ENCODE measurements at regions of chr4 and their contacts with region 1.

Region 1: GRCh38 chr4:38034986-38035882 is 75.0 kb downstream of the PTTG2 start:
- DNase-seq: peak in 1 of 2 donors; percentile 39
- H3K4me3 ChIP-seq: no peak overlapping the region
- H3K27ac ChIP-seq: peak overlapping the region; percentile 19 to 57 (median 34)
- H3K4me1 ChIP-seq: peaks cover 6 to 7% of the 10 kb centered on the region in 2 donors
- H3K27me3 ChIP-seq: no peaks in the 10 kb centered on the region
- CTCF ChIP-seq: peak; percentile 24 to 91 (median 63)
- POLR2A ChIP-seq: no peak

Region 2: GRCh38 chr4:37588150-37588549 is 447.1 kb before region 1 on chr4:
- intact Hi-C with region 1: no loop called
- DNase-seq: no peak
- H3K4me3 ChIP-seq: no peak overlapping the region
- H3K27ac ChIP-seq: no peak overlapping the region
- H3K4me1 ChIP-seq: no peaks in the 10 kb centered on the region
- H3K27me3 ChIP-seq: no peaks in the 10 kb centered on the region
- CTCF ChIP-seq: no peak
- POLR2A ChIP-seq: no peak

Region 3: DNA sequence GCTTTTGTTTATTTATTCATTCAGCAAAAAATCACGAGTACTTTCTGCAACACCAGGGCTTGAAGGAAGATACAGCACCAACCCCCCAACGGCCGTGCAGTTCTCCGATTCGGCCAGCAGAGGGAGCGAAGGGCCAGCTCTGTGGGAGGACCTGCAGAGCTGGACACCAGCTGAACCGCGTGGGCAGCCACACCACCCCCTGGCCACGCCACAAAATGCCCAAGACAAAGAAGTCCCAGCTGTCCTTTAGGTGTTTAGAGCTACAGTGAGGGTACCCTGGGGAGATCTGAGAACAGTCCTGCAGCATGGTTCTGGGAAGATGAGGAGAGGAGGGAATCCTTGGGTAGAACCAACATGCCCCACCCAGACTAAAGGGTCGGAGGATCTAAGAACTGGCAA is 432.2 kb before region 1 on chr4:
- intact Hi-C with region 1: loop called (anchors 10 kb)
- DNase-seq: peak; percentile 83 to 87
- H3K4me3 ChIP-seq: no peak overlapping the region
- H3K27ac ChIP-seq: no peak overlapping the region
- H3K4me1 ChIP-seq: peaks cover 0 to 6% of the 10 kb centered on the region in 2 donors
- H3K27me3 ChIP-seq: no peaks in the 10 kb centered on the region
- CTCF ChIP-seq: peak; percentile 96 to 99 (median 98)
- POLR2A ChIP-seq: no peak

Region 4: GRCh38 chr4:37802068-37802666 is 233.1 kb before region 1 on chr4:
- intact Hi-C with region 1: loop called (anchors 5 kb)
- DNase-seq: peak; percentile 63 to 78
- H3K4me3 ChIP-seq: no peak overlapping the region
- H3K27ac ChIP-seq: no peak overlapping the region
- H3K4me1 ChIP-seq: no peaks in the 10 kb centered on the region
- H3K27me3 ChIP-seq: no peaks in the 10 kb centered on the region
- CTCF ChIP-seq: peak; percentile 12 to 97 (median 72)
- POLR2A ChIP-seq: no peak

Region 5: GRCh38 chr4:37812710-37813109 is 222.5 kb before region 1 on chr4:
- intact Hi-C with region 1: loop called (anchors 5 kb)
- DNase-seq: no peak
- H3K4me3 ChIP-seq: no peak overlapping the region
- H3K27ac ChIP-seq: no peak overlapping the region
- H3K4me1 ChIP-seq: no peaks in the 10 kb centered on the region
- H3K27me3 ChIP-seq: no peaks in the 10 kb centered on the region
- CTCF ChIP-seq: no peak
- POLR2A ChIP-seq: no peak

Region 6: GRCh38 chr4:38319456-38320342 is 284.5 kb after region 1 on chr4:
- intact Hi-C with region 1: no loop called
- DNase-seq: peak; percentile 89 to 95
- H3K4me3 ChIP-seq: no peak overlapping the region
- H3K27ac ChIP-seq: peak overlapping the region; percentile 57 to 90 (median 70)
- H3K4me1 ChIP-seq: peaks cover 19 to 30% of the 10 kb centered on the region in 2 donors
- H3K27me3 ChIP-seq: no peaks in the 10 kb centered on the region
- CTCF ChIP-seq: peak; percentile 87 to 99 (median 96)
- POLR2A ChIP-seq: no peak

Region 7: GRCh38 chr4:38846015-38846414 is 810.8 kb after region 1 on chr4:
- intact Hi-C with region 1: no loop called
- DNase-seq: no peak
- H3K4me3 ChIP-seq: no peak overlapping the region
- H3K27ac ChIP-seq: no peak overlapping the region
- H3K4me1 ChIP-seq: peaks cover 0 to 3% of the 10 kb centered on the region in 2 donors
- H3K27me3 ChIP-seq: no peaks in the 10 kb centered on the region
- CTCF ChIP-seq: no peak
- POLR2A ChIP-seq: no peak